Activated CD8-positive, alpha-beta memory T cell treated with anti-CD3 and anti-CD28 coated beads, Interleukin-2, amount 10 ng/mL, durations not matched to agents 7 days and 5 days (primary cell): ENCODE measurements at regions of chr2 and their contacts with region 1.

Region 1: DNA sequence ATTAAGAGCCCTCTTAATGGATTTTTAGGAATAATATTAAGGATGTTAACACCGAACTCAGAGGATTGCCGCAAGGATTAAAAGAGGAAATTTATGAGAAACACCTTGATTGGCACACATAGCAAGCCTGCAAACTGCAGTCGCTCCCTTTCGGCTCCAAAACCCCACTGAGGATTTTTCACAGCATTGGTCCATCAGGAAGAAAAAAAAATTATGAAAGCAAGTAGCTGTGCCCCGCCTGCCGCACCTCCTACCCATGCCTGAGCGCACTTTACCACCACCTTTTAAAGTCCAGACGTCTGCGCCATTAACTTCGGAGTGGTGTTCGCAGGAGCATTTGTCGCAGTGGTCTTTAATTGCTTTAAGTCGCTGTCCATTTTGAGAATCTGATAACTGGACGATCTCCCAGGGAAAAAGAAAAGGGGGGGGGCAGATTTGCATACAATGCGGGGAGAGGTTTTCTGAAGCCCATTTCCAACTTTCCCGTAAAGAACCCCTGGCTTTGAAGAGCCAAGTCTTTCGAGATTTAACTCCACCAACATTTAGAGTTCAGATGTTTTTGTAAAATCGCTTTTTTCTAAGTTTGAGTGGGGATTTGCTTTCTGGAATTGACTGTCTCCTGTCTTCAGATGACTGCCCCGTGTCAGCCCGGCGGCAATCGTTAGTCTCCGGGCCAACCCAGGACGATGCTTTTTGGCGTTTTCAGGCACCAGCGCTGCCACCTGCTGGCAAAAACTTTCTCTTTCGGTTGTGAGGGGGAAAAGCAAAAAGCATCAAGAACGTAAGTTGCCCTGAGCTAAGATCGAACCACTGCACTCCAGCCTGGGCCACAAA is 914 bp upstream of the TRABD2A start:
- DNase-seq: peak; percentile 94
- ATAC-seq: peak; percentile 77
- H3K4me3 Mint-ChIP-seq: peak overlapping the region; percentile 92
- H3K27ac Mint-ChIP-seq: peak overlapping the region; percentile 89
- H3K4me1 Mint-ChIP-seq: peaks cover 46% of the 10 kb centered on the region
- H3K27me3 Mint-ChIP-seq: no peaks in the 10 kb centered on the region

Region 2: DNA sequence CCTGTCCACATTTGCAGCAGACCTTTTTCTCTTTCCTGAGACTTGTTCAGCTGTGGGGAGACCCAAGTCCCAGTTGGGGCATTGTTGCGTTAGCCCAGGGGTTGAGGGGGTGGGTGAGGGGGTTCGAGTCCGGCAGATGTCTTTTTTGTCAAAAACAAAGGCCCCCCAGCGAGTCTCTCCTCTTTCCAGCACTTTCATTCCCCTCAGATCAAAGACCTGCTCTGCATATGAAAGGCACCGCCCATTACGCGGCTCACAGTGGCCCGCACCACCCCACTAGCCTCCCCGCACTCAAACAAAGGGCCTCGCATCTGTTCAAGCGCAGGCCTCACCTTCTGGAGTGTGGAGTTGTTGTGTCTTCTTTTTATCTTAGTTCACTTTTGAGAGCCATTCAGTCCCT is 26.1 kb before region 1 on chr2:
- CTCF ChIA-PET with region 1: no interaction called
- DNase-seq: no peak
- ATAC-seq: no peak
- H3K4me3 Mint-ChIP-seq: no peak overlapping the region
- H3K27ac Mint-ChIP-seq: no peak overlapping the region
- H3K4me1 Mint-ChIP-seq: peaks cover 67% of the 10 kb centered on the region
- H3K27me3 Mint-ChIP-seq: no peaks in the 10 kb centered on the region

Region 3: GRCh38 chr2:84870306-84870705 is 11.5 kb before region 1 on chr2:
- CTCF ChIA-PET with region 1: interaction called, 15 read pairs
- DNase-seq: peak; percentile 43
- ATAC-seq: no peak
- H3K4me3 Mint-ChIP-seq: no peak overlapping the region
- H3K27ac Mint-ChIP-seq: no peak overlapping the region
- H3K4me1 Mint-ChIP-seq: peaks cover 33% of the 10 kb centered on the region
- H3K27me3 Mint-ChIP-seq: no peaks in the 10 kb centered on the region

Region 4: DNA sequence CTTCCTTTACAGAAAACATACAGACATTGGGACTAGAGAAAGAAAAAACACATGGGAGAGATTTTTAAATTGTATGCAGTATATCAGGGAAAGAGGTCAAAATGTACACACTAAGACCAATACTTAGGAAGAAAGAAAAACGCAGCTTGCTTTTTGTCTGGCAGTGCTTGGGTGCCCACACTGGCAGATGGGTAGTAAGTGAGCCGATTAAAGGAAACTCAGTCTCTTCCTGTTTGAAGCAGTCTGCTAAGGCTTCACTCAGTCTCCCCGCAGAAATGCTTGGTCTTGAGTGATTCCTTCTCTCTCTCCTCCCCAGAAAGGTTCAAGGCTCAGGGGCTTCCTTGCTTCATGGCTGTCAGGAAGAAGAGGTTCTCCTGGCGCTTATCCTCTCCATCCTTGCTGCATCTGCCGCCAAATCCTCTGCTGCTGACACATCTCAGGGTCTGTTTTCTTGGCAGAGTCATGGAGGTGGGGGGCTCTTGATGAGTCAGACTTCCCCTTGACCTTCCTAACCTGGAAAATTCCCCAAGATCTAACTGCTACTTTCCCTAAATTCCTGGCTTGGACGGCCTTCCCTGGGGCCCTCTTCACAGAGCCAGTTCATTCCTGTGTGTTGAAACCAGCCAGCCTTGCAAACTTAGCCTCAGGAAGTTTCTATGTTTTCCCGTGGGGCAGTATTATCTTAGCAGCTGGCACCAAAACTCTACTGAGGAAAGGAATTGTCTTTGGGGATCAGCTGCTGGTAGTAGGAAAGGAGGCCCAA is 13.1 kb after region 1 on chr2:
- CTCF ChIA-PET with region 1: interaction called, 17 read pairs
- DNase-seq: no peak
- ATAC-seq: peak; percentile 32
- H3K4me3 Mint-ChIP-seq: peak overlapping the region; percentile 35
- H3K27ac Mint-ChIP-seq: peak overlapping the region; percentile 75
- H3K4me1 Mint-ChIP-seq: peaks cover 64% of the 10 kb centered on the region
- H3K27me3 Mint-ChIP-seq: no peaks in the 10 kb centered on the region

Region 5: DNA sequence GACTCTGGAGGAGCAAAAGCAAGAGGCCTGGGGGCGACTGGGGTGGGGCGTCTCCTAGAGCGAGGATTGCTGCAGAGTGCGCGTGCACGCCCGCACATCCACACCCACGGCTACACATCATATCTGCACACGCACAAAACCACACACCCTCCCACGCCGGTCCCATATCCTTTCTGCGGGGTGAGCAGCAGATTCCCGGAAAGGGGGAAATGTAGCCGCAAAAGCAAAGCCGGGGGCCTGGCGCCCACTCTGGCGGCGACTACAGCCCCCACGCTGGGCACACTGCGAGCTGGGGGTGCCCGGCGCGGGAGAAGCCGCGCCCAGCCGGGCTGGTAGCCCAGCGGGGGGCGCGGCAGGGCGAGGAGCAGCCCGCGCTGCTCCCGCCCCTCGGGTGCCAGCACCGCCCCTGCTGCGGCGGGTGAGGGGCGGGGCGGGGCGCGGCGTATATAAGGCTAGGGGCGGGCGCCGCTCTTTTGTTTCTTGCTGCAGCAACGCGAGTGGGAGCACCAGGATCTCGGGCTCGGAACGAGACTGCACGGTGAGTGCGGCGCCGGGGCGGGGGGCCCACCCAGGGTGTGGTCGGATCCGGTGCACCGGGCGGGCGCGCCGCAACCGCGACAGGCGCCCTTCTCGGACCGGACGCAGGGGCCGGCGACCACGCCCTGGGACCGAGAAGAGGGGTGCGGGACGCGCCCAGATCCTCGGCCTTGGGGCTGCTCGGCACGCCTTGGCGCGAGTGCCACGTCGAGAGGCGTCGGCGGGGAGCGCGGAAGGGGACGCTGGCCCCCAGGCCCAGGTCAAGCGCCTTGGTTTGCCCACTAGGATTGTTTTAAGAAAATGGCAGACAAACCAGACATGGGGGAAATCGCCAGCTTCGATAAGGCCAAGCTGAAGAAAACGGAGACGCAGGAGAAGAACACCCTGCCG is 23.6 kb after region 1 on chr2 and contains the start of gene TMSB10:
- CTCF ChIA-PET with region 1: interaction called, 26 read pairs
- DNase-seq: peak; percentile 91
- ATAC-seq: peak; percentile 73
- H3K4me3 Mint-ChIP-seq: peak within 1 kb of the TSS; percentile 85
- H3K27ac Mint-ChIP-seq: peak within 1 kb of the TSS; percentile 91
- H3K4me1 Mint-ChIP-seq: peaks cover 72% of the 10 kb centered on the region
- H3K27me3 Mint-ChIP-seq: no peaks in the 10 kb centered on the region
- total RNA-seq, gene TMSB10: 3,578 to 3,807 TPM

Region 6: DNA sequence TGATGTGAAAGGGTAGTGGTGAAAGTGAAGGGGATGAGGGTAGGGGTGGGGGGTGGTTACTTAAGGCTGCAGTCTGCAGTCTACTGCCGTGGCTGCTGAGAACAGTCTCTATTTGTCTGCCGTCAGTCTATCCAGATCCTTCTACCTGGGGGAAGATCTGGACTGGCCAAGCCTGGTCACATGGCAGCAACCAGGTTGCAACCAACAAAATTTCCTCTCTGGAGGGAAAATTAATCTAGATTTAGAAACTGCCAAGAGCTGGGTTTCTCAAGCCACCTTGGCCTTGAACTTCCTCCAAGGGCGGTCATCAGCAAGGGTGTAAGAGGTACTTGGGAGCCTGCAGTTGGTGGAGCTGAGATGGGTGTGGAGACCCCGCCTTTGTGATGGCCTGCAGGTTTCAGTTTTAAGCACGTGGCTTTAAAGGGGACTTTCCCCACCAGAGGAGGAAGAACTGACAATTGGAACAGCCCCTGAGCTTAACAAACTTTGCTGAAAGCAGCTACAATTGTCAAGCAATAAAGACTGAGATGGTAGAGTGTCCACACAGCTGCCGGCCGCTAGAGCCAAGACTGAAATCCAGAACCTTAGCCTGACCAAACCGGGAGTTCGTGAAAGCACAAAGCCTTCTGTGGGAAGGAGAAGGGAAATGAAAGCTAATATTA is 57.8 kb after region 1 on chr2:
- CTCF ChIA-PET with region 1: interaction called, 20 read pairs
- DNase-seq: peak; percentile 95
- ATAC-seq: peak; percentile 87
- H3K4me3 Mint-ChIP-seq: peak overlapping the region; percentile 67
- H3K27ac Mint-ChIP-seq: peak overlapping the region; percentile 96
- H3K4me1 Mint-ChIP-seq: peaks cover 52% of the 10 kb centered on the region
- H3K27me3 Mint-ChIP-seq: no peaks in the 10 kb centered on the region